Motor neuron (in vitro differentiated cells): ENCODE measurements at regions of chr5 and their contacts with region 1.

Region 1: GRCh38 chr5:42057254-42057690 is 132.2 kb downstream of the FBXO4 start:
- ATAC-seq: peak in 6 of 8 experiments; percentile 28 to 78 (median 39)
- H3K4me3 ChIP-seq: no peak overlapping the region
- H3K27ac ChIP-seq: no peak overlapping the region
- H3K4me1 ChIP-seq: no peaks in the 10 kb centered on the region

Region 2: GRCh38 chr5:41707853-41708603 is 349.2 kb before region 1 on chr5:
- in situ Hi-C with region 1: loop called in 1 of 9 experiments (anchors 25 kb)
- ATAC-seq: peak in 4 of 8 experiments; percentile 38 to 96 (median 90)
- H3K4me3 ChIP-seq: no peak overlapping the region
- H3K27ac ChIP-seq: no peak overlapping the region
- H3K4me1 ChIP-seq: no peaks in the 10 kb centered on the region

Region 3: GRCh38 chr5:41856644-41857491 is 200.4 kb before region 1 on chr5:
- in situ Hi-C with region 1: loop called in 2 of 9 experiments (anchors 10 to 25 kb)
- ATAC-seq: peak; percentile 78 to 93 (median 86)
- H3K4me3 ChIP-seq: no peak overlapping the region
- H3K27ac ChIP-seq: no peak overlapping the region
- H3K4me1 ChIP-seq: no peaks in the 10 kb centered on the region

Region 4: GRCh38 chr5:41869739-41870626 is 187.3 kb before region 1 on chr5 and contains the start of gene OXCT1:
- in situ Hi-C with region 1: loop called in 1 of 9 experiments (anchors 25 kb)
- ATAC-seq: peak; percentile 82 to 90 (median 88)
- H3K4me3 ChIP-seq: peak within 1 kb of the TSS; percentile 58 to 87 (median 71)
- H3K27ac ChIP-seq: peak within 1 kb of the TSS; percentile 59 to 86
- H3K4me1 ChIP-seq: peaks cover 4 to 10% of the 10 kb centered on the region in 2 donors
- total RNA-seq, gene OXCT1: 6.6 to 55.5 (median 36.9) TPM